A549 (cell line): ENCODE measurements at regions of chr5 and their contacts with region 1.

Region 1: GRCh38 chr5:141564216-141564692 is 54.5 kb downstream of the DIAPH1 start:
- DNase-seq: peak; percentile 50 to 95
- ATAC-seq: peak; percentile 76 to 93
- H3K4me3 ChIP-seq: no peak overlapping the region
- H3K27ac ChIP-seq: no peak overlapping the region
- H3K4me1 ChIP-seq: no peaks in the 10 kb centered on the region
- CTCF ChIP-seq: peak; percentile 94
- EP300 ChIP-seq: no peak
- POLR2A ChIP-seq: no peak
- RAD21 ChIP-seq: peak; percentile 55 to 69; a peak in 4 of 5 replicates

Region 2: GRCh38 chr5:141199359-141200235 is 364.7 kb before region 1 on chr5 and contains the start of gene PCDHB11:
- CTCF ChIA-PET with region 1: interaction called, 10 read pairs
- POLR2A ChIA-PET with region 1: no interaction called
- DNase-seq: peak; percentile 6 to 39
- ATAC-seq: peak; percentile 68 to 78; a peak in 5 of 6 replicates
- H3K4me3 ChIP-seq: peak within 1 kb of the TSS; percentile 30; the same call in 2 of the 3 replicates
- H3K27ac ChIP-seq: no peak within 1 kb of the TSS
- H3K4me1 ChIP-seq: no peaks in the 10 kb centered on the region
- CTCF ChIP-seq: peak; percentile 38
- EP300 ChIP-seq: no peak
- POLR2A ChIP-seq: no peak
- RAD21 ChIP-seq: peak; percentile 31 to 46; a peak in 4 of 5 replicates
- polyA plus RNA-seq, gene PCDHB11: 0.21 and 0.22 TPM in 2 replicates

Region 3: DNA sequence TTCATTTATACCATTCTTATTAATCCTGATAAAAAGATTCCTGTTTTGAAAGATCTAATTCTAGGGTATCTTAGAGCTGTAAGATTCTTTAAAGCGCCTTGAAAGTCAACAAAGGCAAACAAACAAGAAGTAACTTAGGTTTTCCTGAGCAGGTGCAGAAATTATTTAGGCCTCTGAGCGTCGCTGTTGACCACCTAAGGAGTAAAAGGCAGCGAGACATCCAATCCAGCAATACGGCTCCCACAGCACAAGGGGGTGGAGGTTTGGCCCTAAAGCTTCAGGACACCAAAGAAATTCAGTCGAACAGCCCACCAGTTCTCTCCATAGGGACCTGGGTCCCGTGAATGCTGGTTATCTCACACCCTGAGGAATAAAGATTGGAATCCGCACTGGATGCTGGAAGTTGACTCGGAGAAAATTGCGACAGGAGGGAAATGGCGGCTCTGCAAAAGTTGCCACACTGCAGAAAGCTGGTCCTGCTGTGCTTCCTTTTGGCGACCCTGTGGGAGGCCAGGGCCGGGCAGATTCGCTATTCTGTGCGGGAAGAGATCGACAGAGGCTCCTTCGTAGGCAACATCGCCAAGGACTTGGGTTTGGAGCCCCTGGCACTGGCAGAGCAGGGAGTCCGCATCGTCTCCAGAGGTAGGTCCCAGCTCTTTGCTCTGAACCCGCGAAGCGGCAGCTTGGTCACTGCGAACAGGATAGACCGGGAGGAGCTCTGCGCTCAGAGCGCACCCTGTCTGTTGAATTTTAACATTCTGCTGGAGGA is 225.5 kb before region 1 on chr5 and contains the start of gene PCDHGA2:
- CTCF ChIA-PET with region 1: interaction called, 18 read pairs
- POLR2A ChIA-PET with region 1: no interaction called
- DNase-seq: peak; percentile 24 to 74
- ATAC-seq: peak; percentile 54 to 87; a peak in 4 of 6 replicates
- H3K4me3 ChIP-seq: peak within 1 kb of the TSS; percentile 45
- H3K27ac ChIP-seq: peak within 1 kb of the TSS; percentile 59 to 70
- H3K4me1 ChIP-seq: no peaks in the 10 kb centered on the region
- CTCF ChIP-seq: peak; percentile 35; the same call in 2 of the 3 replicates
- EP300 ChIP-seq: no peak
- POLR2A ChIP-seq: no peak
- RAD21 ChIP-seq: peak; percentile 46 to 53; a peak in 4 of 5 replicates
- polyA plus RNA-seq, gene PCDHGA2: 1.6 and 1.7 TPM in 2 replicates

Region 4: GRCh38 chr5:141369994-141370848 is 194.0 kb before region 1 on chr5 and contains the start of gene PCDHGB3:
- CTCF ChIA-PET with region 1: interaction called, 20 read pairs
- POLR2A ChIA-PET with region 1: interaction called, 8 read pairs
- DNase-seq: peak in 1 of 2 experiments; percentile 55
- ATAC-seq: peak; percentile 90 to 96
- H3K4me3 ChIP-seq: peak within 1 kb of the TSS; percentile 29
- H3K27ac ChIP-seq: peak within 1 kb of the TSS; percentile 2 to 54; a peak in 2 of 6 replicates
- H3K4me1 ChIP-seq: no peaks in the 10 kb centered on the region
- CTCF ChIP-seq: peak; percentile 28; the same call in 2 of the 3 replicates
- EP300 ChIP-seq: no peak
- POLR2A ChIP-seq: no peak
- RAD21 ChIP-seq: peak; percentile 50 to 52
- polyA plus RNA-seq, gene PCDHGB3: 1.1 and 1.2 TPM in 2 replicates

Region 5: GRCh38 chr5:141412854-141413539 is 151.3 kb before region 1 on chr5 and contains the start of gene PCDHGA10:
- CTCF ChIA-PET with region 1: interaction called, 12 read pairs
- POLR2A ChIA-PET with region 1: no interaction called
- DNase-seq: no peak
- ATAC-seq: no peak
- H3K4me3 ChIP-seq: no peak within 1 kb of the TSS
- H3K27ac ChIP-seq: no peak within 1 kb of the TSS
- H3K4me1 ChIP-seq: no peaks in the 10 kb centered on the region
- CTCF ChIP-seq: no peak
- EP300 ChIP-seq: no peak
- POLR2A ChIP-seq: no peak
- RAD21 ChIP-seq: peak in 1 of 2 experiments; percentile 13; a peak in 1 of 5 replicates
- polyA plus RNA-seq, gene PCDHGA10: 0.04 and 0.08 TPM in 2 replicates

Region 6: GRCh38 chr5:141598391-141599350 is 34.4 kb after region 1 on chr5:
- CTCF ChIA-PET with region 1: interaction called, 14 read pairs
- POLR2A ChIA-PET with region 1: no interaction called
- DNase-seq: no peak
- ATAC-seq: peak; percentile 28 to 57; a peak in 3 of 6 replicates
- H3K4me3 ChIP-seq: no peak overlapping the region
- H3K27ac ChIP-seq: 0 out of 6 replicates have a peak overlapping the region, but pooled peaks of 1 of the 2 experiments have one; percentile 9
- H3K4me1 ChIP-seq: peaks cover 15% of the 10 kb centered on the region
- CTCF ChIP-seq: no peak
- EP300 ChIP-seq: no peak
- POLR2A ChIP-seq: no peak
- RAD21 ChIP-seq: no peak

Region 7: GRCh38 chr5:141986072-141986471 is 421.8 kb after region 1 on chr5:
- CTCF ChIA-PET with region 1: no interaction called
- POLR2A ChIA-PET with region 1: no interaction called
- DNase-seq: no peak
- ATAC-seq: no peak
- H3K4me3 ChIP-seq: no peak overlapping the region
- H3K27ac ChIP-seq: no peak overlapping the region
- H3K4me1 ChIP-seq: no peaks in the 10 kb centered on the region
- CTCF ChIP-seq: no peak
- EP300 ChIP-seq: no peak
- POLR2A ChIP-seq: no peak
- RAD21 ChIP-seq: no peak

Region 8: DNA sequence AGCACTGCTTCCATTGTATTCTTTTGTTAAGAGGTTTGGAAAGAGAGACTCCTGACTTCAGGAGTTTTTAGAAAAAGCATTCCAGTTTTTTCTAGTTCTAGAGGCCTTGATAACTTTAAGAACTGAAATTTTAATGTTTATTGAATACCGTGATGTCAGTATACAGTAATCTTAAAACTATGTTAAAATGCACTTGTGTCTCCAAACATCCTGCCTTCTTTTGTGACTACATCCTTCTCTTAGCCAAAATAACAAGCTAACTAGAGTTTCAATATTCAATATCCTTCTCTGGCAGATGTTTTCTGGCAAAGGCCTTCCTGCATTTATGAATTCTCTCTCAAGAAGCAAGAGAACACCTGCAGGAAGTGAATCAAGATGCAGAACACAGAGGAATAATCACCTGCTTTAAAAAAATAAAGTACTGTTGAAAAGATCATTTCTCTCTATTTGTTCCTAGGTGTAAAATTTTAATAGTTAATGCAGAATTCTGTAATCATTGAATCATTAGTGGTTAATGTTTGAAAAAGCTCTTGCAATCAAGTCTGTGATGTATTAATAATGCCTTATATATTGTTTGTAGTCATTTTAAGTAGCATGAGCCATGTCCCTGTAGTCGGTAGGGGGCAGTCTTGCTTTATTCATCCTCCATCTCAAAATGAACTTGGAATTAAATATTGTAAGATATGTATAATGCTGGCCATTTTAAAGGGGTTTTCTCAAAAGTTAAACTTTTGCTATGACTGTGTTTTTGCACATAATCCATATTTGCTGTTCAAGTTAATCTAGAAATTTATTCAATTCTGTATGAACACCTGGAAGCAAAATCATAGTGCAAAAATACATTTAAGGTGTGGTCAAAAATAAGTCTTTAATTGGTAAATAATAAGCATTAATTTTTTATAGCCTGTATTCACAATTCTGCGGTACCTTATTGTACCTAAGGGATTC is 587.5 kb after region 1 on chr5:
- CTCF ChIA-PET with region 1: no interaction called
- POLR2A ChIA-PET with region 1: no interaction called
- DNase-seq: peak; percentile 37 to 77
- ATAC-seq: peak; percentile 77 to 80; a peak in 5 of 6 replicates
- H3K4me3 ChIP-seq: no peak overlapping the region
- H3K27ac ChIP-seq: no peak overlapping the region
- H3K4me1 ChIP-seq: no peaks in the 10 kb centered on the region
- CTCF ChIP-seq: peak; percentile 93
- EP300 ChIP-seq: no peak
- POLR2A ChIP-seq: no peak
- RAD21 ChIP-seq: peak; percentile 92